ENCODE measurements at regions of chr15 and their contacts with region 1.

Region 1: GRCh38 chr15:57706405-57707209 is at the start of gene POLR2M:
- DNase-seq: peak; percentile 96
- H3K4me3 Mint-ChIP-seq: peak within 1 kb of the TSS; percentile 78
- H3K27ac Mint-ChIP-seq: peak within 1 kb of the TSS; percentile 63
- H3K4me1 Mint-ChIP-seq: peaks cover 34% of the 10 kb centered on the region
- H3K27me3 Mint-ChIP-seq: no peaks in the 10 kb centered on the region
- CTCF ChIP-seq: no peak
- total RNA-seq, gene POLR2M: 102 and 107 TPM in 2 replicates

Region 2: GRCh38 chr15:57667171-57667849 is 39.3 kb before region 1 on chr15:
- CTCF ChIA-PET with region 1: interaction called, 14 read pairs
- intact Hi-C with region 1: no loop called
- DNase-seq: peak; percentile 55
- H3K4me3 Mint-ChIP-seq: peak overlapping the region; percentile 47
- H3K27ac Mint-ChIP-seq: peak overlapping the region; percentile 1
- H3K4me1 Mint-ChIP-seq: peaks cover 66% of the 10 kb centered on the region
- H3K27me3 Mint-ChIP-seq: no peaks in the 10 kb centered on the region
- CTCF ChIP-seq: no peak

Region 3: GRCh38 chr15:57675481-57676181 is 31.0 kb before region 1 on chr15:
- CTCF ChIA-PET with region 1: interaction called, 8 read pairs
- intact Hi-C with region 1: loop called (anchors 1 kb)
- DNase-seq: peak; percentile 70
- H3K4me3 Mint-ChIP-seq: peak overlapping the region; percentile 44
- H3K27ac Mint-ChIP-seq: peak overlapping the region; percentile 69
- H3K4me1 Mint-ChIP-seq: peaks cover 69% of the 10 kb centered on the region
- H3K27me3 Mint-ChIP-seq: no peaks in the 10 kb centered on the region
- CTCF ChIP-seq: no peak

Region 4: DNA sequence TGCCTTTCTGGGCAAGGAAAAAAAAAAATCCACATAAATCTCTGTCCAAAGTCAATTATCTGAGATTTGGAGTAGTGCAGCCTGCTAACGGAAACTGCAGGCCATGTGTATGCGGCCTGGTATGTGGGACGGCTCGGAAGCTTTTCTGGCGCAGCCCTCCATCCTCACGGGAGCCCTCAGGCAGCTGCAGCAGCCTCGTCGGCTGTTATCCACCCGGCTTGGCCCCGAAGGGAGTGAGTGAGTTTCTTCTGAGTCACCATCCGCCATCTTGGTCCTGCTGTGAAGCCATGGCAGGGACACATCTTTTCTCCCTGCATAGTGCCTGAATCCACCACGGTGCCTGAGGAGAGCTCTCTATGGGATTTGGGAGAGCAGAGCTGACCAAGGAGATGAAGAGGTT is 62.7 kb after region 1 on chr15:
- CTCF ChIA-PET with region 1: no interaction called
- intact Hi-C with region 1: no loop called
- DNase-seq: no peak
- H3K4me3 Mint-ChIP-seq: no peak overlapping the region
- H3K27ac Mint-ChIP-seq: no peak overlapping the region
- H3K4me1 Mint-ChIP-seq: peaks cover 10% of the 10 kb centered on the region
- H3K27me3 Mint-ChIP-seq: peaks cover 25% of the 10 kb centered on the region
- CTCF ChIP-seq: no peak

Region 5: DNA sequence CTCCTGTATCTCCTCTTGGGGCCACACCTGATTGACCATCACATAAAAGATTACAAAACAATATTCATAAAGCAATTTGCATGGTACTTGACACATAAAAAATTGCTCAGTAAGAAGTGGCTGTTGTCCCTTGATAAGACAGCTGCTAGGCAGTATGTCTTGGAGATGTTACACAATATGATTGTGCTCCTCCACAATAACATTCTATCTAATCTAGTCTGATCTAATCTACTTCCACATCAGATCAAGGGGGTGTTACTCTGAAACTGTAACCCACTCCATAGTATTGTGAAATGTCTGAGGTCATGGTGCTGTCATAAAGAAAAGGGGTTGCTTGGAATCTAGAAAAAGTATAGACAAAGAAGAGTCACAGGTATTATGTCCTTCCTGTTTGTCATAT is 408.2 kb after region 1 on chr15:
- CTCF ChIA-PET with region 1: no interaction called
- intact Hi-C with region 1: no loop called
- DNase-seq: no peak
- H3K4me3 Mint-ChIP-seq: no peak overlapping the region
- H3K27ac Mint-ChIP-seq: no peak overlapping the region
- H3K4me1 Mint-ChIP-seq: no peaks in the 10 kb centered on the region
- H3K27me3 Mint-ChIP-seq: peaks cover 2% of the 10 kb centered on the region
- CTCF ChIP-seq: no peak

Region 6: GRCh38 chr15:59339252-59339672 is 1632.7 kb after region 1 on chr15:
- CTCF ChIA-PET with region 1: no interaction called
- intact Hi-C with region 1: no loop called
- DNase-seq: no peak
- H3K4me3 Mint-ChIP-seq: no peak overlapping the region
- H3K27ac Mint-ChIP-seq: no peak overlapping the region
- H3K4me1 Mint-ChIP-seq: peaks cover 54% of the 10 kb centered on the region
- H3K27me3 Mint-ChIP-seq: no peaks in the 10 kb centered on the region
- CTCF ChIP-seq: no peak